ENCODE measurements at regions of chr10 and their contacts with region 1.

Region 1: GRCh38 chr10:75111367-75111906 is at the start of gene SAMD8:
- DNase-seq: peak; percentile 87 to 97 (median 93)
- ATAC-seq: peak; percentile 83 to 87 (median 86)
- H3K4me3 ChIP-seq: peak within 1 kb of the TSS; percentile 92 to 95
- H3K4me3 Mint-ChIP-seq: peak within 1 kb of the TSS; percentile 84 to 98 (median 91)
- H3K27ac ChIP-seq: peak within 1 kb of the TSS; percentile 94
- H3K27ac Mint-ChIP-seq: peak within 1 kb of the TSS; percentile 91
- H3K4me1 ChIP-seq: peaks cover 22% of the 10 kb centered on the region in 2 experiments
- H3K4me1 Mint-ChIP-seq: peaks cover 51 to 59% (median 53%) of the 10 kb centered on the region in 3 donors
- H3K27me3 ChIP-seq: no peaks in the 10 kb centered on the region
- H3K27me3 Mint-ChIP-seq: no peaks in the 10 kb centered on the region
- total RNA-seq, gene SAMD8: 15.6 to 28.1 (median 16.1) TPM

Region 2: DNA sequence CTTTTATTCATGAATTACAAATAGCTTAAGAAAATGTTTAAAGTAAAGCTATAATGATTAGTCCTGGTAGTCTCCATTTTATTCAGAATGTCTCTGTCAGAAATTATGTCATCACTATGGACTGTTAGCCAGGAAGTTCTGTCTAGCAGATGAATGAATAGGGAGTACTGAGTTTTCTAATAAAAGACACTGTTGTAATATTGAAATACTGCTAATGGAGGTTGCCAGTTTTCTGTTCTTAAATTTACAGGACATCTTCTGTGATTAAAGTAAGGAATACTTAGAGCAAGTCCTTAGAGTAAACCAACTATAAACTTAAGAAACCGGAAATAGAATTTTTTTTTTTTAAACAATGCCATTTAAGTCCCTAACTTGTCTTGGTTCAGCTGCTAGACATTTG is 650.6 kb before region 1 on chr10:
- CTCF ChIA-PET with region 1: no interaction called
- POLR2A ChIA-PET with region 1: no interaction called
- DNase-seq: no peak
- ATAC-seq: no peak
- H3K4me3 ChIP-seq: no peak overlapping the region
- H3K4me3 Mint-ChIP-seq: no peak overlapping the region
- H3K27ac ChIP-seq: no peak overlapping the region
- H3K27ac Mint-ChIP-seq: no peak overlapping the region
- H3K4me1 ChIP-seq: no peaks in the 10 kb centered on the region
- H3K4me1 Mint-ChIP-seq: peaks cover 1 to 11% (median 2%) of the 10 kb centered on the region in 3 donors
- H3K27me3 ChIP-seq: no peaks in the 10 kb centered on the region
- H3K27me3 Mint-ChIP-seq: no peaks in the 10 kb centered on the region

Region 3: DNA sequence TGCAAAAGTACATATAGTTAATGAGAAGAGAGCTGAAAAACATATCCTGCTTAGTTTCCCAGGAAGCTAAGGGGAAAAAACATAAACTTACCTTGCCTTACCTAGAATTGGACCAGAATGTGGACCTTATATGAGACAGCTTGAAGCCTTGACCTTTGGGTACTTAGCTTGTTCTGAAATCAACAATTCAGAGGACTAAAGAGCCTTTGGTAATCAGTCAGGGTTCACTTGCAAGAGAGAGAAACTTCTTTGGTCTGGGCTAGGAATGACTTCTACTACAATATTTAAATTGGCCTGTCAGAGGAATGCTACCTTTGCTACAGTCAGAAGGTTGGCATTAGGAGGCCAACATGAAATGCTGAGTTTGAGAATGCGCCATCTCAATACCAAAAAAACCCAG is 24.9 kb after region 1 on chr10:
- CTCF ChIA-PET with region 1: no interaction called
- POLR2A ChIA-PET with region 1: no interaction called
- DNase-seq: no peak
- ATAC-seq: no peak
- H3K4me3 ChIP-seq: no peak overlapping the region
- H3K4me3 Mint-ChIP-seq: no peak overlapping the region
- H3K27ac ChIP-seq: no peak overlapping the region
- H3K27ac Mint-ChIP-seq: peak overlapping the region in 1 of 2 donors; percentile 80
- H3K4me1 ChIP-seq: no peaks in the 10 kb centered on the region
- H3K4me1 Mint-ChIP-seq: peaks cover 44 to 53% (median 48%) of the 10 kb centered on the region in 3 donors
- H3K27me3 ChIP-seq: no peaks in the 10 kb centered on the region
- H3K27me3 Mint-ChIP-seq: no peaks in the 10 kb centered on the region

Region 4: GRCh38 chr10:75168275-75168674 is 56.8 kb after region 1 on chr10:
- CTCF ChIA-PET with region 1: no interaction called
- POLR2A ChIA-PET with region 1: interaction called in 1 of 2 experiments, 10 read pairs
- DNase-seq: no peak
- ATAC-seq: no peak
- H3K4me3 ChIP-seq: no peak overlapping the region
- H3K4me3 Mint-ChIP-seq: peak overlapping the region in 1 of 3 donors; percentile 61
- H3K27ac ChIP-seq: peak overlapping the region; percentile 15
- H3K27ac Mint-ChIP-seq: peak overlapping the region; percentile 65 to 88
- H3K4me1 ChIP-seq: peaks cover 16 to 24% of the 10 kb centered on the region in 2 experiments
- H3K4me1 Mint-ChIP-seq: peaks cover 44 to 57% (median 49%) of the 10 kb centered on the region in 3 donors
- H3K27me3 ChIP-seq: no peaks in the 10 kb centered on the region
- H3K27me3 Mint-ChIP-seq: no peaks in the 10 kb centered on the region

Measured in T-cell (primary cell).